Panc1 (cell line): ENCODE measurements at regions of chr1 and their contacts with region 1.

Region 1: DNA sequence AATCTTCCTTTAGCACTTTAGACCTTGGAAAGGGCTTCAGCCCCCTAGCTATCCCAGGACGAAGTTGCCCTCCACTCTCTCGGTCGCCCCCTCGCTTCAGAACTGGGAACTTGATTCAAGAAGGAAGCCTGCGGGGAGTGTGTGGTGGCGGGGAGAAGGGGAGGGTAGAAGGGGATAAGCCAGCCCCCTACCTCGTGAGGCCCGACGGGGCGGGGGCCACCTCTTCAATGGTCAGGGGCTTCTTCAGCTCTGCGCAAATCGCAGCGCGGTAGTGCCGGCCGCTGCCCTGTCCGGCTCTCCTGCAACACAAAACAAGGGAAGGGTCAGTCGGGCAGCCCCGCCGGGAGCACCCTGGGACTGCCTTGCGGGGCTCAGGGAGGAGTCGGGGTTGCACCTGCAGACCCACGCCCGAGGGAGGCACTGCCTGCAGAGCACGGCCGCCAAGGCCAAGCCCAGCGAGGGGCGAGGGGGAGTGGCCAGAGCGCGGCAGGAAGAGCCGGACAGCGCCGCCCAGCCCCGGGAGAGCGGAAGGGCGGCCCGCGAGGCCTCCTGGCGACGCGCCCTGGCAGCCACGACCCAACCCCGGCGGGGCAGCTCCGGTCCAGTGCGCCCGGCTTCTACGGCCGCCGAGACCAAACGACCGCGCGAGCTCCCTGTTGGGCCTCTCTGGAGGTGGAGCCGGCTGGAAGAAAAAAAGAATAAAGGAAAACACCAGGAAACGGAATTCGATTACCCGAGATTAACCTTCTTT is 56.2 kb upstream of the RASAL2 start:
- DNase-seq: no peak
- ATAC-seq: peak; percentile 99
- H3K4me3 ChIP-seq: peak overlapping the region; percentile 70
- H3K27ac ChIP-seq: peak overlapping the region; percentile 94
- H3K4me1 ChIP-seq: peaks cover 8% of the 10 kb centered on the region
- H3K27me3 ChIP-seq: no peaks in the 10 kb centered on the region
- CTCF ChIP-seq: peak; percentile 83

Region 2: DNA sequence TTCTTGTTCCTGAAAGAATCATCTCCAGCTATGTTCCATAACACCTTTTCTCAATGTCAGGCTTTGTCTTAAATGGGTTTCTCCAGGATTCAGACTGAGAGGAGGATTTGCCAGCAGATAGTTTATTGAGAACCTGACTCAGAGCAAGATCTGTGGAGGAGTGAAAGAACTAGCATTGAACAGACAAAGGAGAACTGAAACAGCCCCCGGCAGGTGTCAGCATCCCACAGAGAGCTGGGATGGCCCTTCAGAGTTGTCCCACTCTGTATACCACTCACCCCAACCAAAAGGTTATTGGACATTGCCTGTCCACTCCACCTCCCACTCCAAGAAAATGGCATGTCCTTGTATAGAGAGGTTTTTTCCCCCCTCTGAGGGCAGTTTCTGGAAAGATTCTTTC is 1304.0 kb before region 1 on chr1:
- CTCF ChIA-PET with region 1: no interaction called
- POLR2A ChIA-PET with region 1: no interaction called
- in situ Hi-C with region 1: no loop called
- intact Hi-C with region 1: no loop called
- DNase-seq: no peak
- ATAC-seq: no peak
- H3K4me3 ChIP-seq: no peak overlapping the region
- H3K27ac ChIP-seq: no peak overlapping the region
- H3K4me1 ChIP-seq: no peaks in the 10 kb centered on the region
- H3K27me3 ChIP-seq: no peaks in the 10 kb centered on the region
- CTCF ChIP-seq: no peak

Region 3: GRCh38 chr1:177959811-177960515 is 77.7 kb before region 1 on chr1:
- CTCF ChIA-PET with region 1: no interaction called
- POLR2A ChIA-PET with region 1: no interaction called
- in situ Hi-C with region 1: no loop called
- intact Hi-C with region 1: loop called (anchors 2 kb)
- DNase-seq: no peak
- ATAC-seq: peak; percentile 94
- H3K4me3 ChIP-seq: no peak overlapping the region
- H3K27ac ChIP-seq: no peak overlapping the region
- H3K4me1 ChIP-seq: no peaks in the 10 kb centered on the region
- H3K27me3 ChIP-seq: no peaks in the 10 kb centered on the region
- CTCF ChIP-seq: peak; percentile 75

Region 4: GRCh38 chr1:178052650-178053461 is 15.2 kb after region 1 on chr1:
- CTCF ChIA-PET with region 1: no interaction called
- POLR2A ChIA-PET with region 1: no interaction called
- in situ Hi-C with region 1: no loop called
- intact Hi-C with region 1: no loop called
- DNase-seq: no peak
- ATAC-seq: no peak
- H3K4me3 ChIP-seq: peak overlapping the region in 1 of 2 experiments; percentile 1; a peak in 2 of 4 replicates
- H3K27ac ChIP-seq: peak overlapping the region; percentile 39
- H3K4me1 ChIP-seq: peaks cover 29% of the 10 kb centered on the region
- H3K27me3 ChIP-seq: no peaks in the 10 kb centered on the region
- CTCF ChIP-seq: no peak

Region 5: DNA sequence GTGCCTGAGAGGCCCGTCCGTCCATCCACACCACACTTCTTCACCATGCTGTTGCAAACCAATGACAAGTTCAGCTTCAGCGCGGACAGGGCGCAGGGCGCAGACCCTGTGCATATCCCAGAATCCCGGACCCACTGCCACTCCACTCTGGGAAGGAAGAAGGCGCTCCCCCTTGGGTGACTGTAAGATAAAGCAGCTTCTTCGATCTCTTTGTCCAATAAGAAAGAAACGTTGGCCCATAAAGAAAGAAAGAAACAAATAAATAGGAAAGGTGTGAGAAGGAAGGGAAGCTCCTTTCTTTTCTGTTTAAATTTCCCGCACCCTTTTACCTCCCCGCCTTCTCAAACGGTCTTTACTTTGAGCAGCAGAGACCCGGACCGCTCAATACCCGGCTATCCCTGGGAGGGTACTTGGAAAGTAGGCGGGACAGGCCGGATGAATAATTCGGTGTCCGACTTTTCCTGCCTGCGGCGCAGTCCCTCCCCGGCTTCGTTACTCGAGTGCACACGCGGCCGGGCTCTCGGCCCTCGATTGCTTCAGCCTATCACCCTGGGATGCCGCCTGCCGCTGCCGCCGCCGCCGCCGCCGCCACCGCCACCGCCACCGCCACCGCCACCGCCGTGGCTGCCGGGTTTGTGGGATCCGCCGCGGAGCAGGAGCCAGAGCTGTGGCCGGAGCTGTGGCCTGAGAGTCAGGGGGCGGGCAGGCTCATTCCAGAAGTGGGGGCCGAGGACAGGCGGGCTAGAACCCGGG is 55.7 kb after region 1 on chr1:
- CTCF ChIA-PET with region 1: no interaction called
- POLR2A ChIA-PET with region 1: no interaction called
- in situ Hi-C with region 1: no loop called
- intact Hi-C with region 1: no loop called
- DNase-seq: peak; percentile 83
- ATAC-seq: peak; percentile 92
- H3K4me3 ChIP-seq: peak overlapping the region; percentile 80 to 94
- H3K27ac ChIP-seq: peak overlapping the region; percentile 91
- H3K4me1 ChIP-seq: peaks cover 31% of the 10 kb centered on the region
- H3K27me3 ChIP-seq: no peaks in the 10 kb centered on the region
- CTCF ChIP-seq: no peak